HepG2 (cell line): ENCODE measurements at regions of chr5 and their contacts with region 1.

Region 1: DNA sequence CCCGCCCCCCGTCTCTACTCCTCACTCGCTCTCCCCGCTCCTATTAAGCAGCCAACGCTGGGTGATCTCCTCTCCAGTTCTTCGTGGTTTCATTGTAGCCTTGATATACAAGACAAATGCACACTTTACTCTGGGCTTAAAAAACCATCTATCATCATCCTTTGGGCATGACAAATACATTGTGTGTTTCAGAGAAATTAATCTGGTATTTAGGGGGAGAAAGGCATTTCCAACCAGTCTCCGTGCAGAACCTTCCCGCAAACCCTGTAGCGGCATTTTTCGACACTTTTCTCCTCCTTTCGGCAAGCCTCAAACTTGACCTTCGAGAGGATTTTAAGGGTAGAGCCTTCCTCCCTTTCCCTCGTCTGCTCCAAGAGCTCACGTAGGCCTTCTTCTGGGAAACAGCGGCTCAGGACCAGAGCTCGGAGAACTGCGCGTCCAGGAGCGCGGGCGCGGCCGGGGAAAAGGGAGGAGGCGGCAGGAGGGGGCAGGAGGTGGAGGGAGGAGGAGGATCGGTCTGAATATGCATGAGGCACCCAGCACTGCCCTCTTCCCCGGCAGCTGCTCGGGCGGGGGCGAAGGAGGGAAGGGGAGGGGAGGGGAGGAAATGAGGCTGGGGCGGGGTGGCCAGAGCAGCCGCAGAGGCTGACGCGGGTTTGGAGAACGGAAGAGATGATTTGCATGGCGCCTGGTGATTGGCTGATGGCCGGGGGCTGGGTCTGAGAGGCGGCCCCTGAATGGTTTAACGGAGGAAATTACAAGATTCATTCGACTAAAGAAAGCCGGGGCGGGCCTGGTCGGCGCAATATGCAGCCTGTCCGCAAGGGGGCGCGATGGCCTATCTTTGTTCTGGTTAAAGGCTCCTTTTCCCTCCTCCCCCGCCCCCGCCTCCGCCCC is 127.5 kb downstream of the TMEM161B start:
- DNase-seq: peak; percentile 93
- ATAC-seq: peak; percentile 96
- H3K4me3 ChIP-seq: peak overlapping the region; percentile 49 to 68 (median 60)
- H3K27ac ChIP-seq: no peak overlapping the region
- H3K4me1 ChIP-seq: peaks cover 47% of the 10 kb centered on the region
- H3K27me3 ChIP-seq: peaks cover 3 to 48% of the 10 kb centered on the region in 2 experiments; a peak in 4 of 5 replicates
- CTCF ChIP-seq: peak; percentile 71
- EP300 ChIP-seq: no peak
- POLR2A ChIP-seq: no peak
- RAD21 ChIP-seq: no peak

Region 2: DNA sequence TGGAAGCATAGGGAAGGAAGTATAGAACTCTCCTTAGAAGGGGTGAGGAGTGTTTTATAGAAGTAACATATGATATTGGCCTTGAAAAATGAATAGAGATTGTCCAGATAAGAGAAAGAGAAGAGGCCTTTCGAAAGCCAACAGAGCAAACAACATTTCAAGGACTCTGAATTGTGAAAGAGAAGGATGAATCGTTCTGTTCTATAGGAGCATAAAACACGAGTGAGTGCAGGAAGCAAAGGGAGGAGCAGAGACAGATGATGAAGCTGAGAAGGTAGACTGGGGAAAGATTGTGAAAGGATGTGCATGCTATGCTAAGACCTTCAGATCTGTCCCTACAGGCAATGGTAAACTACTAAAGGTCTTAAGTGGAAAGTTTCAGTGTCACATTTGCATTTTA is 143.4 kb before region 1 on chr5:
- CTCF ChIA-PET with region 1: no interaction called
- POLR2A ChIA-PET with region 1: no interaction called
- in situ Hi-C with region 1: no loop called
- intact Hi-C with region 1: loop called (anchors 1 kb)
- DNase-seq: peak; percentile 59
- ATAC-seq: peak; percentile 87
- H3K4me3 ChIP-seq: no peak overlapping the region
- H3K27ac ChIP-seq: no peak overlapping the region
- H3K4me1 ChIP-seq: peaks cover 17% of the 10 kb centered on the region
- H3K27me3 ChIP-seq: no peaks in the 10 kb centered on the region
- CTCF ChIP-seq: no peak
- EP300 ChIP-seq: peak in 1 of 2 experiments; percentile 64; a peak in 2 of 4 replicates
- POLR2A ChIP-seq: no peak
- RAD21 ChIP-seq: no peak

Region 3: DNA sequence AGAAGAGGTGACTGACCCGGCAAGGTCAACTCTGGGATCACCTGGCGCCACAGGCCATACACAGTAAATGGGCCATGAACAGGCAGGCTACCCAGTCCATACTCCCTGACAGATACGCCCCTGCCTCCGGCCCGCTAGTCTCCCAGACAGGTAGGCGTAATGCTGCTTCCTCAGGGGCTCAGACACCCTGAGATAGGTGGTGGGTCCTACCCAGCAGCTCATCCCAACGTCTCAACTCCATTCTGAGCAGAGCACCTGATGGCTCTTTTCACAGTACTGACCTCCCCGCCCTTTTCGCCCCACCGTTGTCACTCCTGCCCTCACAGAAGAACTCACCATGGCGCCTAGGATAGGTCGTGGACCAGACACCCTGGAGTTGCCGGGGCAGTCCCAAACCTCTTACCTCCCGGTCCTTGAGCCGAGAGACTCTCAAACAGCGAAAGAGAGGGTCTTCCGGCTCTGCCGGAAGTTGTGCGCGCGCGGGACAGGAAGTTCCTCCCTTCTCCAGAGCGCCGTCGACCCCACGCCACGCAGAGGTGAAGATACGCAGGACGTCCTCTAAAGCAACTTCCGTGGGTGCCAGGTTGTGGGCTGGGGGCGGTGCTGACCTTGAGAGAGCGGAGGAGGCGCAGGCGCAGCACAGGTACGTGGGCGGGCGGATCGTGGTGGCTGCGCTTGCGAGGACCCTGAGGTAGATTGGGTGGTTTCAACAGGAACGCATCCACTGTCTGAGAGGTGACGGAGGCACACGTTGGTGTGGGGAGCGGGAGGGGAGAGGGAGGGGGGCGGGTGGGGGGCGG is 127.5 kb after region 1 on chr5 and contains the start of gene TMEM161B:
- CTCF ChIA-PET with region 1: no interaction called
- POLR2A ChIA-PET with region 1: no interaction called
- in situ Hi-C with region 1: loop called (anchors 5 kb)
- intact Hi-C with region 1: loop called (anchors 10 kb)
- DNase-seq: peak; percentile 94
- ATAC-seq: peak; percentile 98
- H3K4me3 ChIP-seq: peak within 1 kb of the TSS; percentile 71 to 96 (median 93)
- H3K27ac ChIP-seq: peak within 1 kb of the TSS; percentile 82
- H3K4me1 ChIP-seq: peaks cover 30% of the 10 kb centered on the region
- H3K27me3 ChIP-seq: no peaks in the 10 kb centered on the region; a peak in 1 of 5 replicates
- CTCF ChIP-seq: no peak; the same call in 1 of the 2 replicates
- EP300 ChIP-seq: 0 out of 4 replicates have a peak, but pooled peaks have one; percentile 4 to 8
- POLR2A ChIP-seq: peak; percentile 60 to 89
- RAD21 ChIP-seq: no peak; the same call in 1 of the 2 replicates
- total RNA-seq, gene TMEM161B: 8.0 and 15.0 TPM in 2 replicates

Region 4: GRCh38 chr5:88680253-88681132 is 539.4 kb after region 1 on chr5:
- CTCF ChIA-PET with region 1: interaction called, 5 read pairs
- POLR2A ChIA-PET with region 1: no interaction called
- in situ Hi-C with region 1: loop called (anchors 5 kb)
- intact Hi-C with region 1: loop called (anchors 1 kb)
- DNase-seq: peak; percentile 13
- ATAC-seq: peak; percentile 97
- H3K4me3 ChIP-seq: peak overlapping the region; percentile 19 to 53 (median 40); a peak in 3 of 6 replicates
- H3K27ac ChIP-seq: no peak overlapping the region
- H3K4me1 ChIP-seq: no peaks in the 10 kb centered on the region
- H3K27me3 ChIP-seq: peaks cover 2 to 74% of the 10 kb centered on the region in 2 experiments; a peak in 4 of 5 replicates
- CTCF ChIP-seq: peak; percentile 93
- EP300 ChIP-seq: no peak
- POLR2A ChIP-seq: no peak
- RAD21 ChIP-seq: peak; percentile 94